Esophagus muscularis mucosa (tissue), 4 donors: ENCODE measurements at regions of chr19 and their contacts with region 1.

Region 1: GRCh38 chr19:5031231-5032100 is 62.6 kb downstream of the KDM4B start:
- DNase-seq: peak; percentile 94
- H3K4me3 ChIP-seq: no peak overlapping the region
- H3K27ac ChIP-seq: no peak overlapping the region
- H3K4me1 ChIP-seq: peaks cover 44 to 76% (median 59%) of the 10 kb centered on the region in 4 donors
- H3K27me3 ChIP-seq: no peaks in the 10 kb centered on the region
- CTCF ChIP-seq: peak; percentile 92 to 98 (median 94)
- EP300 ChIP-seq: no peak
- POLR2A ChIP-seq: no peak

Region 2: GRCh38 chr19:4811328-4812131 is 219.9 kb before region 1 on chr19:
- intact Hi-C with region 1: loop called (anchors 5 kb)
- DNase-seq: no peak
- H3K4me3 ChIP-seq: no peak overlapping the region
- H3K27ac ChIP-seq: peak overlapping the region in 2 of 4 donors; percentile 82
- H3K4me1 ChIP-seq: peaks cover 21 to 45% (median 30%) of the 10 kb centered on the region in 4 donors
- H3K27me3 ChIP-seq: no peaks in the 10 kb centered on the region
- CTCF ChIP-seq: peak; percentile 83 to 95 (median 86)
- EP300 ChIP-seq: no peak
- POLR2A ChIP-seq: no peak

Region 3: DNA sequence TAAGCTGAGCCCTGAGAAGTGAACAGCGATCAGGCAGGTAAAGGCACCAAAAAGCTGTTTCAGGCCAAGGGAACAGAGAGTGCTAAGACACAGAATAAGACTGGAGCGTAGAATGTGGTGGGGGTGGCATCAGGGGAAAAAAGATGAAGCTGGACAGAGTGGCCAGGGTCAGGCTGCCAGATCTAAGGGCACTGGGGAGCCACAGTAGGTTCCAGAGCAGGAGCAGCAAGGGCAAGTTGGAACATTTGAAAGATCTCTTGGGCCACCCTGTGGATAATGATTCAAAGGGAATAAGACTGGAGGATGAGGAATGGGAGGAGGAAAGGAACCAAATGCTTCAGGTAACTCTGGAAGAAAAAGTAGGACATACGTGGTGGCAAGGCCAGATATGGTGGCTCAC is 157.5 kb before region 1 on chr19:
- intact Hi-C with region 1: loop called (anchors 2 kb)
- DNase-seq: no peak
- H3K4me3 ChIP-seq: no peak overlapping the region
- H3K27ac ChIP-seq: no peak overlapping the region
- H3K4me1 ChIP-seq: peaks cover 0 to 21% (median 15%) of the 10 kb centered on the region in 4 donors
- H3K27me3 ChIP-seq: peaks cover 0 to 12% (median 0%) of the 10 kb centered on the region in 4 donors
- CTCF ChIP-seq: no peak
- EP300 ChIP-seq: no peak
- POLR2A ChIP-seq: no peak

Region 4: GRCh38 chr19:4967738-4968461 is 63.6 kb before region 1 on chr19:
- intact Hi-C with region 1: loop called (anchors 2 kb)
- DNase-seq: no peak
- H3K4me3 ChIP-seq: peak overlapping the region; percentile 38 to 48 (median 44)
- H3K27ac ChIP-seq: peak overlapping the region; percentile 21 to 74 (median 72)
- H3K4me1 ChIP-seq: peaks cover 29 to 42% (median 39%) of the 10 kb centered on the region in 4 donors
- H3K27me3 ChIP-seq: no peaks in the 10 kb centered on the region
- CTCF ChIP-seq: no peak
- EP300 ChIP-seq: no peak
- POLR2A ChIP-seq: peak; percentile 24